Gastrocnemius medialis (tissue), 4 donors: ENCODE measurements at regions of chr20 and their contacts with region 1.

Region 1: DNA sequence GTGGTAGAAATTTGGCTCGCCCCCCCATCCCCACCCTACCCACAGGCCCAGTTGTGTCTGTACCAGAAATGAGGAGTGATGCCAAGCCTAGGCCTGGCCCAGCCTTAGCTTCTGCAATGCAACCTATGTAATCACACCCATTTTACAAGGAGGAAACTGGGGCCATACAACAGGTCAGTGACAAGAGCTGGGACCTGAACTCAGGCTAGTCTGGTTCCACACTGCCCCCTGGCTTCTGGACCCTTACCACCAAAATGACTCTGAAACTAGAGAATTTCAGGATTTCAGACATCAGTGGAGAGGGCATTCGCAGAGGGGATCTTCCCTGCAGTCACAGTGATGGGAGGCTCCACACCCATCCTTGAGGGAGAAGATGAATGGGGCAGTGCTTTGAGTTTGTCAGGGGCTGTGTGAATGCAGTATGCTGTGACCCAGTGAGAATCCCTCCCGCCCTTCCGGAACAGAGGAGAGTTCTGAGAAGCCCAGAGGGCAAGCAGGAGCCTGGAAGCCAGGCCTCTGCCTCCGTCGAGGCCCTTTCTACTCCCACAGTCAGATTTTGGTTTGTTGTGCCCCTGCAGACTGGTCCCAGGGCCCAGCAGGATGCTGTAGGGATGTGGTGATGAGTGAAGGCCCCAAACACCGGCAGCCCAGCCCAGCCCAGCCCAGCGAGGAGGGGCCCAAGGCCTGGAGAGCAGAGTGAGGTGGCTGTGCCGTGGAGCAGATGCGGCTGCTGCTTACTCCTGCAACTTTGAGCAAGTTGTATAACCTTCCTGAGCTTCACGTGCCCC is 48.1 kb upstream of the MYL9 start:
- DNase-seq: peak in 1 of 2 donors; percentile 41
- ATAC-seq: peak; percentile 31 to 33
- H3K4me3 ChIP-seq: peak overlapping the region in 1 of 4 donors; percentile 22
- H3K27ac ChIP-seq: peak overlapping the region; percentile 89 to 96 (median 92)
- H3K4me1 ChIP-seq: peaks cover 52 to 68% of the 10 kb centered on the region in 2 donors
- H3K27me3 ChIP-seq: no peaks in the 10 kb centered on the region
- CTCF ChIP-seq: peak; percentile 13 to 64 (median 58)
- POLR2A ChIP-seq: peak; percentile 64 to 69

Region 2: GRCh38 chr20:36454698-36455427 is 38.3 kb before region 1 on chr20:
- in situ Hi-C with region 1: no loop called
- intact Hi-C with region 1: loop called (anchors 5 kb)
- DNase-seq: peak in 1 of 2 donors; percentile 71
- ATAC-seq: peak; percentile 89 to 90
- H3K4me3 ChIP-seq: peak overlapping the region in 2 of 4 donors; percentile 8 to 15
- H3K27ac ChIP-seq: peak overlapping the region; percentile 10 to 55 (median 44)
- H3K4me1 ChIP-seq: peaks cover 13 to 17% of the 10 kb centered on the region in 2 donors
- H3K27me3 ChIP-seq: no peaks in the 10 kb centered on the region
- CTCF ChIP-seq: no peak
- POLR2A ChIP-seq: no peak

Region 3: DNA sequence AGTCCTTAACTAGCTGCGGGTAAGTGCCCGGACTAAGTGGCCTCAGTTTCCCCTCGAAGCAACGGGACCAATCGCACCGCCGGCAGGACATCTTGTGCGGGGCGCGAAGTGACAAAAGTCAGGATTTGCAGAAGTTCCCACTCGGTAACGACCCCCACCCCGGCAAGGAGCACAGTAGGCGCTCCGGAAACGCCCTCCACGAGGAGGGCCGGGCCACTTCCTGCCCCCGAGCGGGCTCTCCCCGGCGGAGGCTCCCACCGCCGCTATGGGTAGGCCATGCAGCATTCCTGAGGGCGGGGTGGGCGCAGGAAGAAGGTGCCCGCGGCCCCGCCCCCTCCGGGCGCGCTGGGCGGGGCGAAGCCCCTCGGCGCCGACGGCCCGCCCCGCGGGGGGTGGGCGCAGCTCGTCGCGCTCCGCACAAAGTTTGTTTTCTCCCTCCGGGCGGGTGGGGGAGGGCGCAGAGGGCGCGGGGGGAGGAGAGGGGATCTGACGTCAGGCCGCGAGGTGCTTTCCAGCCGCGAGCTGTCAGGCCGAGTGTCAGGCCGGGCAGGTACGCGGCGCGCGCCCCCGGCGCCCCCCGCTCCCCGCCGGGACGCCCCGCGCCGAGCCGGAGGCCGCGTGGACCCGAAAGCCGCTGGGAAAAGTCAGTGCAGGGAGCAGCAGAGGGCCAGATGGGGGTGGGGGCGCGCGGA is 80.0 kb after region 1 on chr20 and contains the start of gene TGIF2:
- in situ Hi-C with region 1: no loop called
- intact Hi-C with region 1: no loop called
- DNase-seq: peak; percentile 47 to 50
- ATAC-seq: peak; percentile 61 to 67
- H3K4me3 ChIP-seq: peak within 1 kb of the TSS; percentile 68 to 89 (median 72)
- H3K27ac ChIP-seq: peak within 1 kb of the TSS; percentile 69 to 83 (median 75)
- H3K4me1 ChIP-seq: peaks cover 7 to 18% of the 10 kb centered on the region in 2 donors
- H3K27me3 ChIP-seq: peaks cover 10 to 19% (median 16%) of the 10 kb centered on the region in 3 donors
- CTCF ChIP-seq: no peak
- POLR2A ChIP-seq: peak; percentile 32 to 59
- total RNA-seq, gene TGIF2: 1.4 to 3.9 (median 1.4) TPM